Left colon (tissue), 2 donors: ENCODE measurements at regions of chr1 and their contacts with region 1.

Region 1: GRCh38 chr1:37699147-37699546 is 6.8 kb downstream of the CDCA8 start:
- DNase-seq: no peak
- ATAC-seq: no peak

Region 2: DNA sequence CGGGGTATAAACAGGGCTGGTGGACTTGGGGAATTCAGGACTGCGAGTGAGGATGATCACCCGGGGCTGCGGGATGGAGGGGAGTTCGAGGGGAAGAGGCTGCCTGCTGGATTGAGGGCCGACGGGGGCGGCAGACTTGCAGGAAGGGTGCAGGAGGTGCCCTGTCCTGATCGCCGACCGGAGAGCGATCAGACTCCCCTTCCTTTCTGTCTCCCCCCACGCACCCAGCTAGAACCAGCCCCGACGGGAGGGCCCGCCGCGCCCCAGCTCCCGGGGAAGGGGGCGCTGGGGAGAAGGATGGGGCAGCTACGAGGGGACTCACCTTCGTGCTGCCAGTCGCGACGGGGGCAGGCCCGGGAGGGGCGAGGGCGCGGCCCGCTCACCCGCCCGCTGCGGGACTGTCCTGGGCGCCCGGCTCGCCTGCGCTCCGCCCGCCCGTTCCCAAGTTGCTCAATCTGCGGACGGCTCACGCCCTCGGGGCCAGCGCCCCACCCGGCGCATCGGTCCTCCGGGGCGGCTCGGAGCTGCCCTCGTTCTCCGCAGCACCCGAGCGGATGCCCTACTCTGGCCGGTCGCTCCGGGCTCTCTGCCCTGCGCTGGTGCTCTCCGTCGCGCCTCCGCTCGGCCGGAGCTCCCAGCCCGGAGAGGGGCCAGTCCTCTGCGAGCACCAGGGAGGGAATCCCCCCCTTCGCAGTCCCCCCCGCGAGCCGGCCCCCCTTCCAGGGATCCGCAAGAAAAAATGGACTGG is 64.7 kb before region 1 on chr1 and contains the start of gene RSPO1:
- intact Hi-C with region 1: no loop called
- DNase-seq: peak in 1 of 2 donors; percentile 11
- ATAC-seq: peak; percentile 49
- total RNA-seq, gene RSPO1: 0.52 to 0.78 TPM

Region 3: DNA sequence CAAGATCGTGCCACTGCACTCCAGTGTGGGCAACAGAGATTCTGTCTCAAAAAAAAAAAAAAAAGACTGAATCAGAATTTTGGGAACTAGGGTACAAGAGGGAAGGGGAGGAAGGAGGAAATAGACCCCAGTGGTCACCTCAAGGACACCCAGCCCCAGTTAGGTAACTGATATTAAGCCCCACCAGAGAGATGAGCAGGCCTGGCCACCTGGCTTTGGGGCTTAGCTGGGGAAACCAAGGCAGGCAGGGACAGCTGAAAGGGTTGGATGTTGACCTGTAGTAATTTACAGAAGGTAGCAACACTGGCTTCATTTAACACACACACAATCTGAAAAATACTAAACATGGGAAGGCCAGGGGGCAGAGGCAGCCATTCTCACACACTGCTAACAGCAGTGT is 103.3 kb after region 1 on chr1:
- intact Hi-C with region 1: loop called in 1 of 2 experiments (anchors 5 kb)
- DNase-seq: no peak
- ATAC-seq: no peak